Head of caudate nucleus (tissue), 42 donors: ENCODE measurements at regions of chr3 and their contacts with region 1.

Region 1: GRCh38 chr3:189148081-189148507 is 23.7 kb upstream of the TPRG1 start:
- DNase-seq: peak; percentile 12 to 88 (median 69)

Region 2: DNA sequence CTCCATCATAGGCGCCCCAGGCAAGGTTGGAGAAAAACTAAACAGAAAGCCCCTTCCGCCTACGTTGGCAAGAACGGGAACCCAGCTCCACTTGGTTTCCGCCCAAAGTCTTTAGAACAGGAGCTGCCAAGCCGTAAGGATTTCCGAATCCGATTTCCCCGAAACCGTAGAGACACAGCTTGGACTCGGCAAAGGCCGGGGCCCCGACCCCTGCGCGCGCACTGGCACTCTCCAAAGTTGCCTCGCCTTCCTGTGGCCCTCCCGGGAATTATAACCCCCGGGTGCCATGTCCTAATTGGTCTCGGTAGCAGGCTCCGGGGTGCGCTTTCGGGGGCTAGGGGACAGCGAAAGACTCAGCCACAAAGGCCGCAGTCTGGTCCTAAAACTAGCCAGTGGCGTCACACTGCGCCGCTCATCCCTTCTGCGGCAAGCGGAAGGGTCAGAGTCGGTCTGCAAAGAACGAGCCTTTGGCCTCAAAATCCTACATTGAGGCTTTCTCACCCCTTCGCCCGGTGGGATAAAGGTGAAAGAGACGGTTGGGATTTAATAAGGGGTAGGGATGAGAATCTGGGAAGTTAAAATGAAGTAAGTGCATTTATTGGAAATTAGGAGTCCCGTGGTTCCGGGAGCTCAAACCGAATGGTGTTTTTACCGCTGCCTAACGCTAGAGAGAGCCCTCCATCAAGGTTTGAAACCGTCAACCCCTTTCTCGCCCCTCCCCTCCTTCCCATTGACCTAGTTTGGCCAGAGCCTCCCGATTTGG is 1409.6 kb before region 1 on chr3:
- intact Hi-C with region 1: loop called (anchors 2 kb)
- DNase-seq: peak; percentile 73 to 97 (median 90)

Region 3: DNA sequence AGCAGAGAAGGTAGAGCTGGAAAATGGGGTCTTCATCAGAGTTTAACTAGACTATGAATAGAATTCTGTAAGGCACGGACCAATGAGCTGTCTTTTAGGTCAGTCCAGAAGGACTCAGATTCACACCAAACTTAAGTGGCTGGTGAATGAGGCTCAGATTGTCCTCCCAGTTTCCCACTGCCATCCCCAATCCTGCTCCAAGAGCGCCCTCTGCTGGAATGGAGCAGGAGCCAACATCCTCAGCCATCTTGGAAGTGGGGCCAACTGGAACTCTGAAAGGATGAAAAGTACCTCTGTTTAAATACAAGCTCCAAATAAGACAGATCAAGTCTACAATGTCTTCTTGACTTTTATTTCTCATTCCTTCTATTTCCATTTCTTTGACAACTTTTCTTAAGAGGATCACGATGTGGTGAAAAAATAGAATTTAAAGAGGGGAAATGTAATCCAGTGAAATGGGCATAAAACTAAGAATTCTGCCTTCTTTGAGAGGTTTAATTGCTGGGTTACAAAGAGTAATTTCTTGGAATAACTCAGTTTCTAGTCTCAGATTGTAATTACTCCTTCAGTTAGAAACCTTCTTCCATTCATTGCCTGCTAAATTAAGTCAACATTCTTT is 193.4 kb before region 1 on chr3:
- intact Hi-C with region 1: loop called (anchors 10 kb)
- DNase-seq: peak; percentile 64 to 97 (median 90)

Region 4: GRCh38 chr3:189394599-189395121 is 246.6 kb after region 1 on chr3:
- intact Hi-C with region 1: no loop called
- DNase-seq: no peak